Tibial artery (tissue), 4 donors: ENCODE measurements at regions of chr11 and their contacts with region 1.

Region 1: DNA sequence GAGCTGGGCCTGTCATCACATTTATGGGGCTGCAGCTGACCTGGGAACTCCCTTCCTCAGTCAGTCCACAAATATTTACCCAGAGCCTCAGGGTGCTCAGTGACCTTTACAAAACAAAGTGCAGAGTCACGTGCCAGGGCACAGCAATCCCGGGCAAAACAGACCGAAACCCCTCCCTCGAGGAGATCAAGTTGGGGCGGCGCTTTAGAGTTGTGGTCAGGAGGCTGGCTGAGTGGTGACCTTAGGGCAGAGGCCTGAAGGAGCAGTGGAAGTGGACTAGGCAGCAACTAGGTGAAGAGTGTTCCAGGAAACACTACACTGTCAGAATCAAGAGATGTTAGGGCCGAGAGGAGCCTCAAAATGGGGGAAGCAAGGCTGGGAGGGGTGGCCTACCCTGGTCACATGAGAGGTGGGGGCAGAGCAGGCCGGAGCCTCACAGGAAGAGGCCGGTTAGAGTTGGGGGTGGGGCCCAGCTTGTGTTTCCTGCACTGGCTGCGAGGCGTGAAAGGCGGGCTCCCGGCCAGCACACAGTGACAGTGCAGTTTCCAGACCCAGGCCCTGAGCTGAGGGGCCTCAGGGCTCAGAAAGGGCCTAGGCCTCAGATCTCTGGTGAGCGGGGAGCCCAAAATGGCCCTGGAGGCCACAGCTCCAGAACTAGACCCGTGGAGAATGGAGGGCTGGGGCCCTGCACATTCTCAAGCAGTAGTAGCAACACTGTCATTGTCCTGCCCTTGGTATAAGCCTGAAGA is 3.7 kb upstream of the NEAT1 start:
- DNase-seq: peak; percentile 98
- H3K4me3 ChIP-seq: peak overlapping the region; percentile 67 to 97
- H3K27ac ChIP-seq: peak overlapping the region; percentile 94 to 99
- H3K4me1 ChIP-seq: peaks cover 0 to 59% (median 50%) of the 10 kb centered on the region in 4 donors
- H3K27me3 ChIP-seq: no peaks in the 10 kb centered on the region
- CTCF ChIP-seq: no peak

Region 2: GRCh38 chr11:65355776-65356393 is 63.0 kb before region 1 on chr11:
- intact Hi-C with region 1: no loop called
- DNase-seq: peak in 1 of 2 donors; percentile 74
- H3K4me3 ChIP-seq: peak overlapping the region; percentile 64 to 69
- H3K27ac ChIP-seq: no peak overlapping the region
- H3K4me1 ChIP-seq: peaks cover 0 to 27% (median 21%) of the 10 kb centered on the region in 4 donors
- H3K27me3 ChIP-seq: peaks cover 0 to 14% of the 10 kb centered on the region in 2 donors
- CTCF ChIP-seq: no peak

Region 3: GRCh38 chr11:65382033-65382807 is 36.7 kb before region 1 on chr11 and contains the start of gene SLC25A45:
- intact Hi-C with region 1: loop called (anchors 2 kb)
- DNase-seq: peak; percentile 96 to 98
- H3K4me3 ChIP-seq: peak within 1 kb of the TSS; percentile 44 to 51
- H3K27ac ChIP-seq: peak within 1 kb of the TSS; percentile 96 to 97
- H3K4me1 ChIP-seq: peaks cover 9 to 49% (median 40%) of the 10 kb centered on the region in 4 donors
- H3K27me3 ChIP-seq: no peaks in the 10 kb centered on the region
- CTCF ChIP-seq: peak; percentile 88 to 98

Region 4: DNA sequence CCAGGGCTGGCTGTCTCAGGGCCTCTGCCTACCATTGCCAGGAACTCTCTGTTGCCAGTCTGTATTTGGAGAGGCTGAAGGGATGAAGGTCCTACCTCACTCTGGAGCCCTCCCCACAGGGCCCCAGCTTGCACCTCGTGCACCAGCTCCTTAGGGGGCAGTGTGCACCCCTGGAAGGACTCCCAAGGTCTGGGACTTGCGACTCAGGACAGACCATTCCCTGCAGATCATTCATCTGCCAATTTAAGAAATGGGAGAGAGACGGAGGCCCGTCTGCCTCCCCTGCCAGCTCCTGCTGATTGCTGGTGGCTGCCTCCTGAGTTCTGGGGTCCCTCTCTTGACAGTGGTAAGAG is 52.5 kb after region 1 on chr11:
- intact Hi-C with region 1: loop called (anchors 5 kb)
- DNase-seq: peak; percentile 84 to 96
- H3K4me3 ChIP-seq: peak overlapping the region; percentile 28 to 48
- H3K27ac ChIP-seq: peak overlapping the region; percentile 95 to 100
- H3K4me1 ChIP-seq: peaks cover 0 to 68% (median 35%) of the 10 kb centered on the region in 4 donors
- H3K27me3 ChIP-seq: no peaks in the 10 kb centered on the region
- CTCF ChIP-seq: peak; percentile 62 to 67

Region 5: GRCh38 chr11:65506770-65507505 is 88.1 kb after region 1 on chr11:
- intact Hi-C with region 1: loop called (anchors 1 kb)
- DNase-seq: peak; percentile 64 to 78
- H3K4me3 ChIP-seq: peak overlapping the region; percentile 74 to 86
- H3K27ac ChIP-seq: peak overlapping the region; percentile 99
- H3K4me1 ChIP-seq: peaks cover 0 to 47% (median 14%) of the 10 kb centered on the region in 4 donors
- H3K27me3 ChIP-seq: no peaks in the 10 kb centered on the region
- CTCF ChIP-seq: peak in 1 of 2 experiments; percentile 5